HAP-1 (cell line): ENCODE measurements at regions of chr14 and their contacts with region 1.

Region 1: DNA sequence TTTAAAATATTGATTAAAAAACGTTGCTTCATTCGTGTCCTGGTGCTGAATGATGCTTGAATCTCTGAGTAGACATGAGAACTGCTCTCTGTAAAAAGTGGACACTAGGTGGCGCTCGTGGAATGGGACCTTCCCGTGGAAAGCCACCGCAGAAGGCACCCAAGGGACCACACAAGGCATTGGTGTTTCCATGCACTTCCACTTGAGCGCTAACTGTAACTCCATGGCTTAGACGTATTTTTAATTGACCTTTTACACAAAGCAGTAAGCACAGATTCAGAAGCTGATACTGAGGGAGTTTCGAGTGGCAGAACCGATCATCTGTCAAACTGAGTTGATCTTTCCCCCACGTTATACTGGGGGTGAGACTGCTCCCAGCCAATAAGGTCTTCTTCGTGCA is 135.3 kb downstream of the PRKCH start:
- DNase-seq: peak; percentile 51 to 90
- H3K4me3 ChIP-seq: no peak overlapping the region
- H3K4me1 ChIP-seq: no peaks in the 10 kb centered on the region
- H3K27me3 ChIP-seq: peaks cover 3% of the 10 kb centered on the region

Region 2: DNA sequence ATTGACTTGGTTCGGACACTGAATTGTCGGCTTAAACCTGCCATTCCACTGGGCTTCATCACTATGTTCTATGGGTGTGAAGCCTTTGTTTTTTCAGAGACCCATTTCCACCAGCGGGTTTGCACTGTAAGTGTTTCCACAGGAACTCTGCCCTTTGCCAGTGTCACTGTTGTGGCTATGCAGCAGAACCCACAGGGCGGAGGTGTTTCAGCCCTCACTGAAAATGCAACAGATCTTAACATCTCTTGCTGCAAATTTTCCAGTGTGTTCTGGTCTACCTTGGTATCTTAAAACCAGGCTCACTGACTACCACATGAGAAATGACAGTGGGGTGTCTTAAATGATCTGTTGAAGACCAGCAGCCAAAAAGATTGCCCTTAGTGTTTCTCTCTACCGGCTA is 114.2 kb before region 1 on chr14:
- in situ Hi-C with region 1: no loop called
- DNase-seq: no peak
- H3K4me3 ChIP-seq: no peak overlapping the region
- H3K4me1 ChIP-seq: no peaks in the 10 kb centered on the region
- H3K27me3 ChIP-seq: peaks cover 7% of the 10 kb centered on the region; the same call in 1 of the 2 replicates

Region 3: GRCh38 chr14:61730756-61731373 is 274.1 kb after region 1 on chr14:
- in situ Hi-C with region 1: loop called (anchors 10 kb)
- DNase-seq: no peak
- H3K4me3 ChIP-seq: no peak overlapping the region
- H3K4me1 ChIP-seq: no peaks in the 10 kb centered on the region
- H3K27me3 ChIP-seq: no peaks in the 10 kb centered on the region

Region 4: DNA sequence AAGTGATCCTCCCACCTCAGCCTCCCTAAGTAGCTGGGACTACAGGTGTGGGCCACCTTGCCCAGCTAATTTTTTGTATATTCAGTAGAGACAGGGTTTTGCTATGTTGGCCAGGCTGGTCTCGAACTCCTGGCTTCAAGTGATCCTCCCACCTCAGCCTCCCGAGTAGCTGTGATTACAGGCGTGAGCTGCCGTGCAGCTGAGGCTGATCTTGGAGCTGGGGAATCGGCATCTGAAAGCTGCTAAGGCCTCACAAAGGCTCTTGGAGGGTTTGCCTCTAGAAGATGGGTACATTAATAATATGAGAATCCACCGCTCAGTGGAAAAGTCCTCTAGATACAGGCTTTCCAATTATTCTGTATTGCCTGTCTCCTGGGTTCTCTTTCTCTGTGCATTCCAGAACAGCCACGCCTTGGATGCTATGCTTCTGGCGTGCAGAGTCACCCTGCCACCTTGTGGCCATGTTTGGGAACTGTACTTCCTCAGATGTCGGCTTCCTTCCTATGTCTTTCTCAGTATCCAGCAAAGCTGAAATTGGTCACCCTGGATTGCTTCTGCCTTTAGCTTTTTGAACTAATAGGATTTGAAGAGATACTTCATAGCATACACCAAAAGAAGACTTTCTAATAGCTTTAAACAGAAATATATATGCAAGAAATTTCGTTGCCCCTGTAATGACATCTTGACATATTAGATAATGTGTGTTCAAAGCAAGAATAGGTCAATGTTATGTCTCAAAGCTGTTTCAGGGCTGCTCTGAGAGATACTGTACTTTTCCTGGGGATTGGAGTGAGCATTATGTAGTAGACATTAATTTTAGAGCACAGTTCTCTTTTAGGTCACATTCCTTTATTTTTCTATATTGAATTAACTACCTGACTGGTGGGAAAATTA is 380.9 kb after region 1 on chr14:
- in situ Hi-C with region 1: loop called (anchors 5 kb)
- DNase-seq: peak; percentile 63 to 83
- H3K4me3 ChIP-seq: no peak overlapping the region
- H3K4me1 ChIP-seq: no peaks in the 10 kb centered on the region
- H3K27me3 ChIP-seq: peaks cover 14% of the 10 kb centered on the region; the same call in 1 of the 2 replicates

Region 5: DNA sequence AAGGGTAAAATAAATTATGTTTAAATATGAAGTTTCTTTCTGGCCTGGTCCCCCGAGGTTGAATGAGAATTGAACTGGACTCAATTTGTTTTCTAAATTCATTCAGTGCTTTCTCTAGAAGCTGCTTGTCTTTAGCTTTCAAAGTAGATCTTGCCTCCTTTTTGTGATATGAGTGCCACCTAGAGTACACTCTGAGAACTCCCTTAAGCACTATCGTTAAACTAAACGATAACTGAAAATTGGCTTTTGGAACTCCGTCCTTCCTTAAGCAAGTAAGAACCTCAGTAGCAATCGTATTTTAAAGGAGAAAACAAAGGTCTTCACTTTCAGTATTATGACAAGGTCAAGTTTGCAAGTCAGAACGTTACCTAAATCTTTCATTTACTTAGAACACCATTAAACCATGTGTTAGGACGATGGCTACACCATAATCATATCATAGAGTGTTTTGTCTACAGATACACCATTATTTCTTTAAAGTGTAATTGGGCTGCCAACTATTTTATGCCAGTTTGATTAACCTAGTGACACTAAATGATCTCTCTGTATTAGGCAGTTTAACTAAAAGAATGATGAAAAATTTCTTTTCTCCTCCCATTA is 670.3 kb after region 1 on chr14:
- in situ Hi-C with region 1: loop called (anchors 10 kb)
- DNase-seq: peak; percentile 14 to 51
- H3K4me3 ChIP-seq: no peak overlapping the region
- H3K4me1 ChIP-seq: no peaks in the 10 kb centered on the region
- H3K27me3 ChIP-seq: peaks cover 19% of the 10 kb centered on the region